ENCODE measurements at regions of chr6 and their contacts with region 1.

Region 1: DNA sequence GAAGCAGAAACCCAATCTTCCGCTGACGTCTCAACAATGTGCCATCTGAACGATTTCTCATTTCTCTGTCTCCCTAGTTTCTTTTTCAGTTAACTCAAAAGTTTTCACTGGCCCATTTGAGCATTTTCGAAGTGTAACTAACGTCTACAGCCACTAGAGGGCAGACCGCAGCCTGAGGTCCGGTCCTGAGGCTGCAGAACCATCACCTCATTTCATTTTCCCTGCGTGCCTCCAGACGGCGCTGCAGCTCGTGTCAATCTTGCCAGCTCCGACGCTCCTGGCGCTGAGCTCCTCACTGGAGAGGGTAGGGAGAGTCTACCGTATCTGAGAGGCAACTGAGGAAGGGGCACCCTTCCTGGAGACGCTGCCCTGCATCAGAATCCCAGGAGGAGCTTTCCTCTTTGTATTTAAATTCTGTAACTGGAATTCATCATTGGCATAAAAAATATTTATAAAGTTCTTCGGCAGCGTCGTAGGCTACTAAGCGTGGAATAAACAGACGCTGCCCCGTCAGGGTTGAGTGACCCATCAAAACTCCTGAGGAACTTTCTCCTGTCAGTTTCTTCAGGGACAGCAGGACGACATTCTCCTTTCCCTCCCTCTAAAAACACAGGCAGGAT is 28.5 kb upstream of the DTNBP1 start:
- DNase-seq: peak; percentile 66 to 86 (median 82)
- H3K4me3 ChIP-seq: peak overlapping the region in 57 of 59 donors; percentile 4 to 63 (median 45)
- H3K27ac ChIP-seq: no peak overlapping the region
- H3K27me3 ChIP-seq: no peaks in the 10 kb centered on the region
- CTCF ChIP-seq: peak; percentile 96 to 100 (median 100)

Region 2: DNA sequence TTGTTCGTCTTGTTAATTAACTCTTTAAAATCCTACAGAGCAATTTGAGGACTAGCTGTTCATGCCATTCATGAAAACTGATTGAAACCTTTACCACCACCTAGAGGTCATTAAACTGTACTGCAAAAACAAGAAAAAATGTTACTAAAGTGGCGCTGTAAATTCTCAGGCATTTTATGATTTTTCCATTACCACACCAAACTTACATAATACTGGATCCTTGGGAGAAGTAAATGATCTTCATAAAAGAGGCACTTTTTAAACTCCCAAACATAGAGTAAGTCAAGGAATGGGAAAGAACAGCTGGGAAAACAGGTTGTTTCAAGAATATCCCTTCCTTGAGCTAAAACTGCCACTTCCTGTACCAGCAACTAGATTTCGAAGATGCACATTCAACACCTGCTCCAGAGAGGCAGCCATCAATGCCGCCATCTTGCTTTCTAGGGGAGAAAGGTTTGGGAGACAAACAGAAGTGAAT is 491.9 kb after region 1 on chr6:
- intact Hi-C with region 1: loop called (anchors 1 to 2 kb)
- DNase-seq: no peak
- H3K4me3 ChIP-seq: peak overlapping the region in 19 of 59 donors; percentile 6 to 42 (median 24)
- H3K27ac ChIP-seq: peak overlapping the region in 12 of 59 donors; percentile 1 to 64 (median 32)
- H3K27me3 ChIP-seq: peaks cover 0 to 3% (median 0%) of the 10 kb centered on the region in 45 donors
- CTCF ChIP-seq: peak; percentile 67 to 93 (median 84)

Region 3: DNA sequence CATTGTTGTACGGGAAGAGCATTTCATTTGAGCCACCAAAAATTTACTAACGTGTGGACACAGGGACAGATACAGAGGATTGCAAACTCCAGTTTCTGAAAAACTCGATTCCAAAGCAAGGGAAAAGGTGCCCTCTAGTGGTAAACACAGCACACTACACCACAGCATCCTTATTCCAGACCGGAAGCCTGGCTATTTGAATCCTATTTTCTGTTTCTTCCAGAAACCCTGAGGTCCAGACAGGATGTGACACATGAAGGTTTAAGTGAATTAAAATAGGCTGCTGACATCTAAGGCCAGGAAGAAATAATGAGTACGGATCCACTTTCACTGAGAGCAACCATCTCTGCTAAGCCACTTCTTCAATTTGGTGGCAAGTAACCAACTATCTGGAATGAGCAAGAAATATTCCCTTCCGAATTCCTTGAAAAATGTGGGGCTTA is 515.3 kb after region 1 on chr6:
- intact Hi-C with region 1: loop called (anchors 1 kb)
- DNase-seq: peak in 4 of 10 donors; percentile 47 to 77 (median 53)
- H3K4me3 ChIP-seq: no peak overlapping the region
- H3K27ac ChIP-seq: no peak overlapping the region
- H3K27me3 ChIP-seq: peaks cover 0 to 12% (median 0%) of the 10 kb centered on the region in 45 donors
- CTCF ChIP-seq: peak; percentile 93 to 100 (median 98)